Cardiac septum (tissue), 1 donor: ENCODE measurements at regions of chrX and their contacts with region 1.

Region 1: DNA sequence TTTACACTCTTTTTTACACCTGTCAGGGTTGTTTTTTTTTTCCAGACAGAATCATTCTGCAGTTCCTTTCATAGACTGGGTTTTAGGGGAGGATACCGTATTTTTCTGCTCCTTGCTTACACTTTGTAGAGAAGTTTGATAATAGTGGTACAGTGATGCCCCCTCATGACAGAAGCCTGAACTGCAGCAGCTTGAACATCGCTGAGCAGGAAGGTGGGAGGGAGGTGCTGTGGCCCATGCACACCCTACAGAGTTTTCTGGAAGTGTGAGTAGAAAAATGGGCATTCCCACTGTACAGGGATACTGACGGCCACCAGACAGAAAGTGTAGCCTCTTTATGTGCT is 54.5 kb downstream of the RAB40A start:
- DNase-seq: no peak

Region 2: GRCh38 chrX:103214870-103215424 is 249.8 kb before region 1 on chrX and contains the start of gene BEX4:
- intact Hi-C with region 1: loop called (anchors 5 kb)
- DNase-seq: peak; percentile 91
- total RNA-seq, gene BEX4: 34.3 TPM

Region 3: DNA sequence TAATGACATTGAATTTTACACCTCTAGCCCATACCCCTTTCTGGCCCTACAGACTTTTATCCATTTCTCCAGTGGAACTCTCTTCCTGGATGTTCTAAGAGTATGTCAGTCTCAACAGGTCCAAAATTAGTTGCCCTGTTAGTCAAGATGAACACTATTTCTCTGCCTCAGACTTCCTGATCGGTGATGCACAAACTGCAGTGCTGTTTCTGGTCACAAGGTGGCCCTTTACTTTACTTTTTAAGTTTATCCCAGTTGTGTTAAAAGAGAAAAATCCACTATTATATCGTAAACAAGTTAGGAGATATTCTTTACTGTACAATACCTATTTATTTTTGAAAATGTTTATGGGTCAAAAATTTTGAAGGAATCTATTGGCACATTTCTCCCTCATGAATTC is 121.6 kb before region 1 on chrX:
- intact Hi-C with region 1: loop called (anchors 2 kb)
- DNase-seq: no peak

Region 4: DNA sequence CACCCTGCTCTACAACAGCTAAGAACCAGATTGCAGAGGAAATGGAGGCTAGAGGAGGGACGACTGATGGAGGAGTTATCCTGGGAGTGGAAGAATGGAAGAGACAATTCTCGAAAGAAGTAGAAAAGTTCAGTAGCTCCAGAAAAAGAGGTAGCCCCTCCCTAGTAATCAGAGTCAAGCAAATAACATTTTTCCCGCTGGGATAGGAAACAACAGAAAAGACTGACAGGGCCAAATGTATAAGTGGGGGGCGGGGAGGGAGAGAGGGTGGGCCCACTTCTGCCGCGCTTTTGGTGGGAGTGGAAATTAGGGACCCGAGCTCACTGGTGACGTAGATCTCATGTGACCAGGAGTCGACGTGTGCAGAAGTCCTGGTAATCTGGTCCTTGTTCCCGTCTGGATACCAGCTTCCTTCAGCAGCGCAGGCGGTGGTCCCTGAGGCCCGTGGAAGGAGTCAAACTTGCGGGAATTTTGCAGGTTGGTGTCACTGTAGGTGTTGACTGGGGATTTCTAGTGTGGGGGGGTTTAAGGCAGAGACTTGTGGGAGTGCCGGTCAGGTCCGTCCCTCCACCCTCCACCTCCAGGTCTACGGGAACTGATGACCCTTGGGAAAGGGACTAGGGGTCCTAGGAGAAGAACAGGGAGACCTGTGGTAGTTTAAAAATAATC is 108.5 kb before region 1 on chrX and contains the start of gene TCEAL9:
- intact Hi-C with region 1: loop called (anchors 5 kb)
- DNase-seq: no peak
- total RNA-seq, gene TCEAL9: 28.6 TPM